Cardiac septum (tissue), 1 donor: ENCODE measurements at regions of chr19 and their contacts with region 1.

Region 1: GRCh38 chr19:36687214-36688056 is at the start of gene ZNF567:
- DNase-seq: peak; percentile 98
- total RNA-seq, gene ZNF567: 3.0 TPM

Region 2: GRCh38 chr19:36665832-36666231 is 21.6 kb before region 1 on chr19:
- intact Hi-C with region 1: loop called (anchors 1 kb)
- DNase-seq: no peak